IMR-90 (cell line): ENCODE measurements at regions of chr10 and their contacts with region 1.

Region 1: GRCh38 chr10:107576746-107577145 is 412.2 kb upstream of the SORCS1 start:
- DNase-seq: no peak
- ATAC-seq: no peak
- H3K4me3 ChIP-seq: no peak overlapping the region
- H3K27ac ChIP-seq: no peak overlapping the region
- H3K4me1 ChIP-seq: no peaks in the 10 kb centered on the region
- H3K27me3 ChIP-seq: no peaks in the 10 kb centered on the region
- CTCF ChIP-seq: no peak
- POLR2A ChIP-seq: no peak
- RAD21 ChIP-seq: no peak

Region 2: GRCh38 chr10:107557916-107558315 is 18.8 kb before region 1 on chr10:
- CTCF ChIA-PET with region 1: no interaction called
- POLR2A ChIA-PET with region 1: no interaction called
- dilution Hi-C with region 1: no loop called
- in situ Hi-C with region 1: no loop called
- intact Hi-C with region 1: loop called (anchors 1 kb)
- DNase-seq: no peak
- ATAC-seq: no peak
- H3K4me3 ChIP-seq: no peak overlapping the region
- H3K27ac ChIP-seq: no peak overlapping the region
- H3K4me1 ChIP-seq: no peaks in the 10 kb centered on the region
- H3K27me3 ChIP-seq: no peaks in the 10 kb centered on the region
- CTCF ChIP-seq: no peak
- POLR2A ChIP-seq: no peak
- RAD21 ChIP-seq: no peak

Region 3: DNA sequence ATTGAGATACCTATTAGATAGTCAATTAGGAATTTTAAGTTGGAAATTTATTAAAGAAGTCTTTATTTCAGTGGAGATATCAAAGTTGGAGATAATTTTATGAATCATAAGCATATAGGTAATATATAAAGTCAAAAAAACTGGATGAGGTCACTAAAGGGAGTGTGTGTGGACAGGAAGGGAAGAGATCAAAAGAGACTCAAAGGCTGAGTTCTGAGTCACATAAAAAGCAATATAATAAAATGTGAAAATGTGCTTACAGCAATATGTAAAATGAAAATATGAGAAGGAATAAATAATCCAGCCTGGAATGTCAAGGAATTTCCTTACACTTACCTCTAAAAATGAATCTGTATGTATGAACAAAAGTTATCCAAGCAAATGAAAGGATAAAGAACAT is 171.1 kb after region 1 on chr10:
- CTCF ChIA-PET with region 1: no interaction called
- POLR2A ChIA-PET with region 1: no interaction called
- dilution Hi-C with region 1: no loop called
- in situ Hi-C with region 1: no loop called
- intact Hi-C with region 1: no loop called
- DNase-seq: no peak
- ATAC-seq: no peak
- H3K4me3 ChIP-seq: no peak overlapping the region
- H3K27ac ChIP-seq: no peak overlapping the region
- H3K4me1 ChIP-seq: no peaks in the 10 kb centered on the region
- H3K27me3 ChIP-seq: no peaks in the 10 kb centered on the region
- CTCF ChIP-seq: no peak
- POLR2A ChIP-seq: no peak
- RAD21 ChIP-seq: no peak

Region 4: DNA sequence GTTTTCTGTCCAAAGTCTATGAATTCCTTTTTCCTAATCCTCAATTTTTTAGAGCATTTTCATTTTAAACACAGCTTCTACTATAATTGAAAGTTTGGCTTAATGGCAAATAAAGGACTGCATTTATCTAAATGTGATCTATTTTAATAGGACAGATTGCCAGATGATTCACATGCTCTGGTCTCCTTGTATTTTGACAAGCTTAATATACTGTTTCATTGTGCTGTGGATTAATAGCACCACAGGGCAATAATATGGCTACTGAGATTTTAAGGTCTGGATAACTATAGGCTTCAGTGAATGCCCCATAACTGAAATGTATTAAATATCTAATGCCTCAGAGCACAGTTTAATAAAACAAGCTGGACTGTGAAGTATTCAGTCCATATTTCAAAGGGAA is 983.7 kb after region 1 on chr10:
- CTCF ChIA-PET with region 1: no interaction called
- POLR2A ChIA-PET with region 1: interaction called, 12 read pairs
- dilution Hi-C with region 1: no loop called
- in situ Hi-C with region 1: no loop called
- intact Hi-C with region 1: no loop called
- DNase-seq: no peak
- ATAC-seq: no peak
- H3K4me3 ChIP-seq: no peak overlapping the region
- H3K27ac ChIP-seq: no peak overlapping the region
- H3K4me1 ChIP-seq: no peaks in the 10 kb centered on the region
- H3K27me3 ChIP-seq: no peaks in the 10 kb centered on the region
- CTCF ChIP-seq: no peak
- POLR2A ChIP-seq: no peak
- RAD21 ChIP-seq: no peak